A673 (cell line): ENCODE measurements at regions of chr15 and their contacts with region 1.

Region 1: DNA sequence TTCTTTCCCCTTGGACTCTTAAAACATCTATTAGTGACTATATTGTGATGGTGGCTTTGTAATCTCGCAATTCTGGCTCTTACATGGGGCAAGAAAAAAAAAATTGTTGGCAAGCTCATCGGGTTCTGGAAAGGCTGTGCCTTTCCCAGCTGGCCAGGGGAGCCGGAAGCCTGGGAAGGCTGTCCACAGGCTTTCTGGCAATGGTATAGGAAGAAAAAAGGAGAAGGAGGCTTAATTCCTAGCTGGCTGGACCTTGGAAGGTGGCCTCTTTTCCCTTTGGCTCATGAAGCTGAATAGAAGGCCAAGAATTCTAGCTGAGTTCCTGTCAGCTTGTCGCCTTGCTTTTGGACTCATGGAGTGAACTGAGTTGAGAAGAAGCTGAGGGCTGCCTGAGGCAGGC is 243.5 kb upstream of the SEMA6D start:
- DNase-seq: no peak
- H3K4me3 ChIP-seq: no peak overlapping the region
- H3K27ac ChIP-seq: no peak overlapping the region
- H3K4me1 ChIP-seq: peaks cover 29% of the 10 kb centered on the region
- H3K27me3 ChIP-seq: no peaks in the 10 kb centered on the region
- CTCF ChIP-seq: no peak

Region 2: DNA sequence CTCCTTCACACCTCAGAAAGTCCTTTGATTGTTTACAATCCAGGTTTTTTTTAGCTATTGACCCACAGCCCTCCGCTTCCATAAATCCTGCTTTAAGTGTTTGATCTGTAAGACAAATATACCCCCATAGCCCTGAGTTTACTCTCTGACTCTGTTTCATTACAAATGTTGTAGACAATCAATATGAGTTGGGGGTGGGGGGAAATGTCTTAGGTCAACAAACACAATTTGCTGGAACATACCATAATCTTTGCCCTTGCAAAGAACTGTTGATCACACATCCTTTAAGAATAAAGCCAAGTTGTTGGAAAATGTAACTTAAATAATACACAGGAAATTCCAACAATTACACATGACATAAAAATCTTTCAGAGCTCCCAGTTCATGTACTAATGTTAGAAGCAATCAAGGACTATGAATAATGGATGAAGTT is 58.3 kb before region 1 on chr15:
- CTCF ChIA-PET with region 1: no interaction called
- POLR2A ChIA-PET with region 1: no interaction called
- intact Hi-C with region 1: no loop called
- DNase-seq: peak; percentile 91
- H3K4me3 ChIP-seq: peak overlapping the region; percentile 3
- H3K27ac ChIP-seq: peak overlapping the region; percentile 89
- H3K4me1 ChIP-seq: peaks cover 66% of the 10 kb centered on the region
- H3K27me3 ChIP-seq: no peaks in the 10 kb centered on the region
- CTCF ChIP-seq: no peak

Region 3: DNA sequence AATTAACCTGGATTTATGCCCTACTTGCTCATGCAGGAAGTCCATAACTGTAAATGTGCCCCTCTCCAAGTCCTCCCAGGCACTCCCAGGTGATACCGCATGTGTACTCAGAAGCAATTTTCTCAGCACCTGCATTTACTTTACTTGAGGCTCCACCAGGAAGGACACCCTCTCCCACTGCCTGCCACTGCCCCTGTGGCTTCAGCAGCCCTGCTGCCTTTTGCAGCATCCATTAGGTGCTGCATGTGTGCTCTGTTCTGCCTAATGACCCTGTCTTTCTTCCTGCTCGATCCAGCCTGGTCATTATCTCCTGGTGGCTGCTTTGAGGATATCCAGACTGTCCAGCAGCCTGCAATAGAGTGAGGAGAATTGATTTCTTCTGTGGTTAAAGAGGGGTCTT is 135.9 kb after region 1 on chr15:
- CTCF ChIA-PET with region 1: no interaction called
- POLR2A ChIA-PET with region 1: no interaction called
- intact Hi-C with region 1: loop called (anchors 5 kb)
- DNase-seq: no peak
- H3K4me3 ChIP-seq: no peak overlapping the region
- H3K27ac ChIP-seq: no peak overlapping the region
- H3K4me1 ChIP-seq: peaks cover 26% of the 10 kb centered on the region
- H3K27me3 ChIP-seq: no peaks in the 10 kb centered on the region
- CTCF ChIP-seq: no peak

Region 4: DNA sequence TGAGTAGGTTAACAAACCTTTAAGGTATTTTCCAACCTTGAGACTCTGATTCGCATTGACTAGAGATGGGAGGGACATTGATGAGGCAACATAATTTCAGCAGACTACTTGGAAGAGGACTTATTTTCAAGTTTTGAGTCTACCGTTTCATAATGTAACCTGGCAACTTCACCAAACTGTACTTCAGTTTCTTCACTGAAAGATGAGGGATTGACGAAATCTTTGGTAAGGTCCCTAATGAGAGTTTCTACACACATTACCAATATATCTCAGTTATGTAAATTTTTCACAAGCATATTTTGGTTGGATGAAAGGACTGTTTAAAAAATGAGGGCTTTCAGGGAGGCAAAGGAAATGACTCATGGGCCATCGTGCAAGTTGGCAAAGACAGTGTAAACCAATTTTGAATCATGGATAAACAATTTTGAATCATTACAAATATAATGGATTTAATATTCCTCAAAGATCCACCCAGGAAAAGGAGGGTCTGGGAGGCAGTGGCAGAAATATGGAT is 214.8 kb after region 1 on chr15:
- CTCF ChIA-PET with region 1: no interaction called
- POLR2A ChIA-PET with region 1: no interaction called
- intact Hi-C with region 1: loop called (anchors 10 kb)
- DNase-seq: peak; percentile 61
- H3K4me3 ChIP-seq: no peak overlapping the region
- H3K27ac ChIP-seq: peak overlapping the region; percentile 83
- H3K4me1 ChIP-seq: peaks cover 27% of the 10 kb centered on the region
- H3K27me3 ChIP-seq: no peaks in the 10 kb centered on the region
- CTCF ChIP-seq: no peak